AG04449 (cell line): ENCODE measurements at regions of chr16 and their contacts with region 1.

Region 1: DNA sequence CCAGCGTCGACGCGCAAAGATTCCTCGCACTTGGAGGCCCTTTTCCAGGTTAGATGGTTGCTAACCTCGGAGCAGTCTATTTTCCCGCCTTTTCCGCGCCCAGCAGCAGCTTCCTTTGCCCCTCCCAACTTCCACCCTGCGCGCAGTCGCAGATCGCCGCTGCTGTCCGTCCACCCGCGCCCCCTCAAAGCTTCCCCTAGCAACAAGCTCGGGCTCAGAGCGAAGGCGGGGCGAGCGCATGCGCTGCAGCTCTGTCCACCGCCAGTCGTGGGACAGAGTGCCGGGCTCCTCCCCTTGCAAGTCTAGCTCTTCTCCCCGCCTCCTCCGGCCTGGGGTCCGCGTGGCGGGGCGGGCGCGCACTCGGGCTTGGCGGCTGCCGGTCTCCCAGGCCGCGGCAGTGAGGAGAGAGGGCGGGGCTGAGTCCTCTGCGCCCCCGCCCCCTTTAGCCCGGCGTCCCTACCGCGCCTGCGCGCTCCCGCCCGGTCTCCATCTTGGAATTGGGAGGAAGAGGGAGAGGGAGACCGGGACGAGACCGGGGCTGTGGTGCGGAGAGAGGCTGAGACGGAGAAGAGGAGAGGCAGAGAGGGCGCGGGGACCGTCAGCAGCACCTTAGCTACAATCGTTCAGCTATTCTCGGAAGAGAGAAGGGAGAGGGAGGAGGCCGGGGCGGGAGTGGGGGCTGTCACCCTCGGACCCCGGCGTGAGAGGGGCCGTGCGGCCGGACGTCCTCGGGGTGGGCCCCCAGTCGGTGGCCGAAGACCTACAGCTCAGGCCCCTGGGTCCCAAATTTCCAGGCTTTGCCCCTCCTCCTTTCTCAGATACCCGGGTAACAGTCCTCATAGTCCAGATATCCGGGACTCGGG is at the start of gene TAOK2:
- DNase-seq: peak; percentile 92
- H3K4me3 ChIP-seq: peak within 1 kb of the TSS; percentile 95
- CTCF ChIP-seq: no peak

Region 2: GRCh38 chr16:29848420-29849297 is 125.0 kb before region 1 on chr16:
- CTCF ChIA-PET with region 1: interaction called, 10 read pairs
- POLR2A ChIA-PET with region 1: no interaction called
- DNase-seq: no peak
- H3K4me3 ChIP-seq: no peak overlapping the region
- CTCF ChIP-seq: peak; percentile 90

Region 3: GRCh38 chr16:29926005-29926710 is 47.5 kb before region 1 on chr16 and contains the start of gene KCTD13:
- CTCF ChIA-PET with region 1: interaction called, 6 read pairs
- POLR2A ChIA-PET with region 1: interaction called, 10 read pairs
- DNase-seq: no peak
- H3K4me3 ChIP-seq: peak within 1 kb of the TSS; percentile 95
- CTCF ChIP-seq: no peak

Region 4: GRCh38 chr16:29943846-29944669 is 29.6 kb before region 1 on chr16:
- CTCF ChIA-PET with region 1: interaction called, 11 read pairs
- POLR2A ChIA-PET with region 1: interaction called, 9 read pairs
- DNase-seq: peak; percentile 95
- H3K4me3 ChIP-seq: peak overlapping the region; percentile 24
- CTCF ChIP-seq: peak; percentile 41

Region 5: GRCh38 chr16:29961479-29962343 is 11.9 kb before region 1 on chr16 and contains the start of gene TMEM219:
- CTCF ChIA-PET with region 1: interaction called, 27 read pairs
- POLR2A ChIA-PET with region 1: interaction called, 17 read pairs
- DNase-seq: no peak
- H3K4me3 ChIP-seq: peak within 1 kb of the TSS; percentile 79
- CTCF ChIP-seq: peak; percentile 26

Region 6: DNA sequence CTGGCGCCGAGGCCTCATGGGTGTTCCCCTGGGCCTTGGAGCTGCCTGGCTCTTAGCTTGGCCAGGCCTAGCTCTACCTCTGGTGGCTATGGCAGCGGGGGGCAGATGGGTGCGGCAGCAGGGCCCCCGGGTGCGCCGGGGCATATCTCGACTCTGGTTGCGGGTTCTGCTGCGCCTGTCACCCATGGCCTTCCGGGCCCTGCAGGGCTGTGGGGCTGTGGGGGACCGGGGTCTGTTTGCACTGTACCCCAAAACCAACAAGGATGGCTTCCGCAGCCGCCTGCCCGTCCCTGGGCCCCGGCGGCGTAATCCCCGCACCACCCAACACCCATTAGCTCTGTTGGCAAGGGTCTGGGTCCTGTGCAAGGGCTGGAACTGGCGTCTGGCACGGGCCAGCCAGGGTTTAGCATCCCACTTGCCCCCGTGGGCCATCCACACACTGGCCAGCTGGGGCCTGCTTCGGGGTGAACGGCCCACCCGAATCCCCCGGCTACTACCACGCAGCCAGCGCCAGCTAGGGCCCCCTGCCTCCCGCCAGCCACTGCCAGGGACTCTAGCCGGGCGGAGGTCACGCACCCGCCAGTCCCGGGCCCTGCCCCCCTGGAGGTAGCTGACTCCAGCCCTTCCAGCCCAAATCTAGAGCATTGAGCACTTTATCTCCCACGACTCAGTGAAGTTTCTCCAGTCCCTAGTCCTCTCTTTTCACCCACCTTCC is 13.9 kb after region 1 on chr16:
- CTCF ChIA-PET with region 1: interaction called, 12 read pairs
- POLR2A ChIA-PET with region 1: interaction called, 5 read pairs
- DNase-seq: no peak
- H3K4me3 ChIP-seq: no peak overlapping the region
- CTCF ChIP-seq: no peak

Region 7: GRCh38 chr16:29995911-29996772 is 22.5 kb after region 1 on chr16 and contains the start of gene INO80E:
- CTCF ChIA-PET with region 1: interaction called, 3 read pairs
- POLR2A ChIA-PET with region 1: interaction called, 18 read pairs
- DNase-seq: no peak
- H3K4me3 ChIP-seq: peak within 1 kb of the TSS; percentile 93
- CTCF ChIP-seq: no peak